WTC11 (cell line): ENCODE measurements at regions of chr17 and their contacts with region 1.

Region 1: DNA sequence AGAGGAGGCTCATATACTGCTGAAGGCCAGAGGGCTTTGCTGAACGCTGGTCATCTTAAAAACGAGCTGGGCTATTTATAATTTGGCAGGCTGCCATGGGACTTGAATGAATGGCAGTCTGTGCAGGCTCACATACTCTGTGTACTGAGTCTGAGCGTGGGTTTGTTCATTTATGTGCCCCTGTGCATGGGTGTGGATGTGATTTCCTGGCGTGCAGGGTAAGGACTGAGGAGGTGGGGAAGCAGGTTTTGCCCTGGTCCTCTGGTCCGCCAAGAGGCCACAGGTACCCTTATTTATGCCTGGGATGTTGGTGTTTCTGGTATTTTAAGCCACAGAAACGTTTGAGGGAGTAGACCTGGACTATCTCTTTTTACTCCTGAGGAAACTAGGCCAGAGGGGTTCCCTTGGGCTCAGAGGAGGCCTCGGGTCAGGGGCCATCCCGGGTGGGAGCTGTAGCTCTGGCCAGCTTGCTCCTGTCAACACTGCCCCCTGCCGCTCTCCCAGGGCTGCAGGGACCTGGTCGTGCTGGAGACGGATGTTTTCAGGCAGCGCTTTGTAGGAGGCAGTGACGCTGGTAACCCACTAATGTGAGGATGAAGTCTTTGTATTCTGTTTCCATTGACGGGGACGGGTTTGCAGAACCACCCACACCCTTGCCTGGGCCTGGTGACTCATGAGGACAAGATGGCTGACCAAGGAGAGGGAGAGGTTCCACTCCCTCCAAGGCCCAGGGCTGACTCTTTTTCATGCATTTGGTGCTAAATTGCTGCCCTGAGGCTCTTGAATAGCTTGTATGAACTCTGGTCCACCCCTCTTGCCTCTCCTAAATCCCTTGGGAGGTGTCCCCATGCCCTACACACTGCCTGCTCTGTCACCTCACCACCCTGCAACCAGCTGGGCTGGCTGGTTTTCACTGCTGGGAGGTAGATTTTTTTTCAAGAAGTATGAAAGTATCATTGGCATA is 184.5 kb downstream of the MSI2 start:
- DNase-seq: peak; percentile 74
- ATAC-seq: peak; percentile 87
- H3K4me3 Mint-ChIP-seq: no peak overlapping the region
- H3K27ac Mint-ChIP-seq: peak overlapping the region; percentile 47
- H3K4me1 Mint-ChIP-seq: peaks cover 66% of the 10 kb centered on the region
- H3K27me3 Mint-ChIP-seq: no peaks in the 10 kb centered on the region
- CTCF ChIP-seq: peak; percentile 36; the same call in 1 of the 2 replicates

Region 2: DNA sequence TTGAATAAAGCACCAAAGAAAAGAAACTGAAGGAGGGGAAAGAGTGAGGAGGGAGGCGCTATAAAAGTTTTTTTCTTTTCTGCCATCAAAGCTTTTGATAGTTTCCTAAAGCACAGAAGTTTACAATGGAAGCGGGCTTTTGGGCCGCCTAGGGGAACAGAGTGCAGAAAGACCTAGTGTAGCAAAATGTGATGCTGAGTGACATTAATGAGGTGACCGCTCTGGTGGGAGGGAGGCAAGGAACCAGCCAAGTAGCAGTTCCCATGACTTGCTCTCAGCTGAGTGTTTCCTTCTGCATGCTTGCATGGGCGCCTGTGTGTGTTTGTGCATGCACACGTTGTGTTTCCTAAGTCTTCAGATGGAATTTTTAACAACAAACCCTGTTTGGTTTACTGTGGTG is 169.0 kb before region 1 on chr17:
- CTCF ChIA-PET with region 1: no interaction called
- POLR2A ChIA-PET with region 1: no interaction called
- DNase-seq: no peak
- ATAC-seq: no peak
- H3K4me3 Mint-ChIP-seq: no peak overlapping the region
- H3K27ac Mint-ChIP-seq: no peak overlapping the region
- H3K4me1 Mint-ChIP-seq: peaks cover 21% of the 10 kb centered on the region
- H3K27me3 Mint-ChIP-seq: no peaks in the 10 kb centered on the region
- CTCF ChIP-seq: no peak

Region 3: GRCh38 chr17:57366558-57367351 is 74.0 kb before region 1 on chr17:
- CTCF ChIA-PET with region 1: no interaction called
- POLR2A ChIA-PET with region 1: no interaction called
- DNase-seq: no peak
- ATAC-seq: no peak
- H3K4me3 Mint-ChIP-seq: no peak overlapping the region
- H3K27ac Mint-ChIP-seq: no peak overlapping the region; the same call in none of the 2 replicates
- H3K4me1 Mint-ChIP-seq: peaks cover 63% of the 10 kb centered on the region
- H3K27me3 Mint-ChIP-seq: no peaks in the 10 kb centered on the region
- CTCF ChIP-seq: no peak

Region 4: GRCh38 chr17:57408071-57408811 is 32.6 kb before region 1 on chr17:
- CTCF ChIA-PET with region 1: interaction called, 24 read pairs
- POLR2A ChIA-PET with region 1: interaction called, 3 read pairs
- DNase-seq: peak; percentile 38
- ATAC-seq: peak; percentile 82
- H3K4me3 Mint-ChIP-seq: peak overlapping the region; percentile 14; the same call in 1 of the 2 replicates
- H3K27ac Mint-ChIP-seq: peak overlapping the region; percentile 87
- H3K4me1 Mint-ChIP-seq: peaks cover 57% of the 10 kb centered on the region
- H3K27me3 Mint-ChIP-seq: no peaks in the 10 kb centered on the region
- CTCF ChIP-seq: no peak

Region 5: GRCh38 chr17:57420734-57421717 is 19.8 kb before region 1 on chr17:
- CTCF ChIA-PET with region 1: interaction called, 14 read pairs
- POLR2A ChIA-PET with region 1: no interaction called
- DNase-seq: no peak
- ATAC-seq: no peak
- H3K4me3 Mint-ChIP-seq: no peak overlapping the region
- H3K27ac Mint-ChIP-seq: no peak overlapping the region
- H3K4me1 Mint-ChIP-seq: peaks cover 32% of the 10 kb centered on the region
- H3K27me3 Mint-ChIP-seq: no peaks in the 10 kb centered on the region
- CTCF ChIP-seq: no peak

Region 6: GRCh38 chr17:57468932-57469775 is 28.4 kb after region 1 on chr17:
- CTCF ChIA-PET with region 1: interaction called, 14 read pairs
- POLR2A ChIA-PET with region 1: no interaction called
- DNase-seq: no peak
- ATAC-seq: no peak
- H3K4me3 Mint-ChIP-seq: no peak overlapping the region
- H3K27ac Mint-ChIP-seq: no peak overlapping the region
- H3K4me1 Mint-ChIP-seq: peaks cover 90% of the 10 kb centered on the region
- H3K27me3 Mint-ChIP-seq: peaks cover 5% of the 10 kb centered on the region
- CTCF ChIP-seq: no peak